ENCODE measurements at regions of chr17 and their contacts with region 1.

Region 1: GRCh38 chr17:4789901-4790704 is 1.3 kb downstream of the GLTPD2 start:
- DNase-seq: peak; percentile 61 to 92 (median 74)
- ATAC-seq: peak; percentile 85
- H3K4me3 ChIP-seq: peak overlapping the region; percentile 65
- H3K4me3 Mint-ChIP-seq: peak overlapping the region; percentile 91
- H3K27ac ChIP-seq: peak overlapping the region; percentile 58 to 74
- H3K27ac Mint-ChIP-seq: peak overlapping the region; percentile 74
- H3K4me1 ChIP-seq: peaks cover 36% of the 10 kb centered on the region
- H3K4me1 Mint-ChIP-seq: peaks cover 24% of the 10 kb centered on the region
- H3K27me3 ChIP-seq: peaks cover 29% of the 10 kb centered on the region in 2 experiments
- H3K27me3 Mint-ChIP-seq: peaks cover 45% of the 10 kb centered on the region
- CTCF ChIP-seq: peak; percentile 81

Region 2: GRCh38 chr17:4703330-4703691 is 86.8 kb before region 1 on chr17:
- CTCF ChIA-PET with region 1: interaction called, 6 read pairs
- POLR2A ChIA-PET with region 1: interaction called, 27 read pairs
- intact Hi-C with region 1: no loop called
- DNase-seq: no peak
- ATAC-seq: no peak
- H3K4me3 ChIP-seq: peak overlapping the region; percentile 76
- H3K4me3 Mint-ChIP-seq: peak overlapping the region; percentile 87
- H3K27ac ChIP-seq: peak overlapping the region; percentile 76 to 81
- H3K27ac Mint-ChIP-seq: peak overlapping the region; percentile 91
- H3K4me1 ChIP-seq: peaks cover 30% of the 10 kb centered on the region
- H3K4me1 Mint-ChIP-seq: peaks cover 44% of the 10 kb centered on the region
- H3K27me3 ChIP-seq: no peaks in the 10 kb centered on the region
- H3K27me3 Mint-ChIP-seq: no peaks in the 10 kb centered on the region
- CTCF ChIP-seq: no peak

Region 3: DNA sequence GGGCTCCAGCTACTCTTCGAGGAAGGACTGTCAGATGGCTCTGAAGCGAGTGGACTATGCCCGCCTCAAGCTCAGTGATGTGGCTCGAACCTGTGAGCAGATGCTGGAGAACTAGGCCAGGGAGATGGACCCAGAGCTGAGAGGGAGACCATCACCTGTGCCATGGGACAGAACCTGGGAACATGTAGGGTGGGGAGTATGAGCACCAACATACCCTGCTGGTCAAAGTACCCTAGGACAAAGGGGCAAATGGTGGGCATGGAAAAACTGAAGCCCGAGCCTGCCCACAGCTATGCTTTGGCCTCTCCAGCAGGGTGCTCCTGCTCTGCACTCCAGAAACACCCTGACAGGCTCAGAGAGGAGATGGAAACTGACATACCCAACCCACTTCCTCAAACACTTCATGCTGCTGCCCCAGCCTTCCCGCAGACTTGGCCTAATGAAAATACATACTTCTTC is 57.0 kb before region 1 on chr17:
- CTCF ChIA-PET with region 1: interaction called, 13 read pairs
- POLR2A ChIA-PET with region 1: interaction called, 13 read pairs
- intact Hi-C with region 1: loop called (anchors 1 to 5 kb)
- DNase-seq: peak in 3 of 14 experiments; percentile 42 to 68 (median 55)
- ATAC-seq: no peak
- H3K4me3 ChIP-seq: no peak overlapping the region
- H3K4me3 Mint-ChIP-seq: peak overlapping the region; percentile 1
- H3K27ac ChIP-seq: no peak overlapping the region
- H3K27ac Mint-ChIP-seq: peak overlapping the region; percentile 5
- H3K4me1 ChIP-seq: peaks cover 29% of the 10 kb centered on the region
- H3K4me1 Mint-ChIP-seq: peaks cover 24% of the 10 kb centered on the region
- H3K27me3 ChIP-seq: no peaks in the 10 kb centered on the region
- H3K27me3 Mint-ChIP-seq: no peaks in the 10 kb centered on the region
- CTCF ChIP-seq: no peak

Region 4: DNA sequence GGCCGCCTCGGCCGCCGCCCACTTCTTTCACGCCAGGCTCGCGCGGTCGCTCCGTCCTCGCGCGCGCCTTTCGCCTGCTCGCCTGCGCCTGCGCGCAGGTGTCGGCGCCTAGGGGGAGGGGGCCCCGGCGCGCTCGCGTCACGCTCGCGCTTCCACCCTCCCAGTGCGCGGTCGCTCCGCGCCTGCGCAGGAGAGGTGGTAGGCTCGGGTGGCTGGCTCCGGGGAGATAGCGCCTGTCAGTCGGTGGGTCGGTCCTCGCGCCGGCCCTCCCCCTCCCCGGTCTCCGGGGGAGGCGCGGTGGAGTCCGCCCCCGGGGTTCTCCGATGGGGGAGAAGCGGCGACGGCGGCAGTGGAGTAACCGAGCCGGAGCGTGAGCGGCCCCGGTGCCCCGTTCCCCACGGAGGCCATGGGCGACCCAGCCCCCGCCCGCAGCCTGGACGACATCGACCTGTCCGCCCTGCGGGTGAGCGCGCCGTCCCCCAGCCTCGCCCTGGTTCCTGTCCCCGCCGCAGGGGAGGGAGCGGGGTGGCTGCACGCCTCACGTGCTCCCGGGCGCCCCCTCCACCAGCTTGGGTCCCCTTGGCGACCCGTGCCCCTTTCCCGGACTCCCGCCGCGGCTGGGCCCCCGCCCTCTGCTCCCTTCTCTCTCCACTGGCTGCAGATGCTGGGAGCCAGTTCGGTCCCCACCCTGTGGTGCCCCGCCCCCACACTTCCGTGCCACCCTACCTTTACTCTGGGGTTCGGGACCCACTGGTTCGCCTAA is 43.3 kb after region 1 on chr17 and contains the start of gene MINK1:
- CTCF ChIA-PET with region 1: interaction called, 13 read pairs
- POLR2A ChIA-PET with region 1: interaction called, 14 read pairs
- intact Hi-C with region 1: loop called in 1 of 2 experiments (anchors 5 kb)
- DNase-seq: peak; percentile 76 to 98 (median 88)
- ATAC-seq: peak; percentile 87
- H3K4me3 ChIP-seq: peak within 1 kb of the TSS; percentile 85
- H3K4me3 Mint-ChIP-seq: peak within 1 kb of the TSS; percentile 94
- H3K27ac ChIP-seq: peak within 1 kb of the TSS; percentile 63 to 74
- H3K27ac Mint-ChIP-seq: peak within 1 kb of the TSS; percentile 80
- H3K4me1 ChIP-seq: peaks cover 32% of the 10 kb centered on the region
- H3K4me1 Mint-ChIP-seq: peaks cover 48% of the 10 kb centered on the region
- H3K27me3 ChIP-seq: no peaks in the 10 kb centered on the region
- H3K27me3 Mint-ChIP-seq: no peaks in the 10 kb centered on the region
- CTCF ChIP-seq: no peak
- total RNA-seq, gene MINK1: 163 to 171 TPM

Region 5: GRCh38 chr17:4891411-4892342 is 101.6 kb after region 1 on chr17:
- CTCF ChIA-PET with region 1: interaction called, 7 read pairs
- POLR2A ChIA-PET with region 1: no interaction called
- intact Hi-C with region 1: loop called (anchors 2 kb)
- DNase-seq: peak in 1 of 14 experiments; percentile 31
- ATAC-seq: no peak
- H3K4me3 ChIP-seq: no peak overlapping the region
- H3K4me3 Mint-ChIP-seq: no peak overlapping the region
- H3K27ac ChIP-seq: no peak overlapping the region
- H3K27ac Mint-ChIP-seq: no peak overlapping the region
- H3K4me1 ChIP-seq: peaks cover 2% of the 10 kb centered on the region
- H3K4me1 Mint-ChIP-seq: peaks cover 5% of the 10 kb centered on the region
- H3K27me3 ChIP-seq: no peaks in the 10 kb centered on the region
- H3K27me3 Mint-ChIP-seq: no peaks in the 10 kb centered on the region
- CTCF ChIP-seq: no peak

Region 6: GRCh38 chr17:5249615-5250014 is 459.5 kb after region 1 on chr17:
- CTCF ChIA-PET with region 1: no interaction called
- POLR2A ChIA-PET with region 1: no interaction called
- intact Hi-C with region 1: no loop called
- DNase-seq: peak; percentile 26 to 83 (median 54)
- ATAC-seq: peak; percentile 94
- H3K4me3 ChIP-seq: no peak overlapping the region
- H3K4me3 Mint-ChIP-seq: peak overlapping the region; percentile 34
- H3K27ac ChIP-seq: no peak overlapping the region
- H3K27ac Mint-ChIP-seq: peak overlapping the region; percentile 42
- H3K4me1 ChIP-seq: peaks cover 11% of the 10 kb centered on the region
- H3K4me1 Mint-ChIP-seq: peaks cover 6% of the 10 kb centered on the region
- H3K27me3 ChIP-seq: no peaks in the 10 kb centered on the region
- H3K27me3 Mint-ChIP-seq: no peaks in the 10 kb centered on the region
- CTCF ChIP-seq: peak; percentile 66

Region 7: GRCh38 chr17:5877948-5878347 is 1087.8 kb after region 1 on chr17:
- CTCF ChIA-PET with region 1: no interaction called
- POLR2A ChIA-PET with region 1: no interaction called
- intact Hi-C with region 1: no loop called
- DNase-seq: no peak
- ATAC-seq: no peak
- H3K4me3 ChIP-seq: no peak overlapping the region
- H3K4me3 Mint-ChIP-seq: no peak overlapping the region
- H3K27ac ChIP-seq: no peak overlapping the region
- H3K27ac Mint-ChIP-seq: no peak overlapping the region
- H3K4me1 ChIP-seq: no peaks in the 10 kb centered on the region
- H3K4me1 Mint-ChIP-seq: no peaks in the 10 kb centered on the region
- H3K27me3 ChIP-seq: peaks cover 2 to 11% of the 10 kb centered on the region in 2 experiments
- H3K27me3 Mint-ChIP-seq: peaks cover 38% of the 10 kb centered on the region
- CTCF ChIP-seq: no peak

Measured in CD4-positive, alpha-beta T cell (primary cell).